ENCODE measurements at regions of chr6 and their contacts with region 1.

Region 1: GRCh38 chr6:52407467-52407866 is 12.7 kb upstream of the EFHC1 start:
- DNase-seq: no peak
- H3K4me3 Mint-ChIP-seq: no peak overlapping the region
- H3K27ac Mint-ChIP-seq: no peak overlapping the region
- H3K4me1 Mint-ChIP-seq: peaks cover 5% of the 10 kb centered on the region
- H3K27me3 Mint-ChIP-seq: peaks cover 1% of the 10 kb centered on the region

Region 2: GRCh38 chr6:52020945-52021570 is 386.4 kb before region 1 on chr6:
- CTCF ChIA-PET with region 1: no interaction called
- POLR2A ChIA-PET with region 1: no interaction called
- DNase-seq: no peak
- H3K4me3 Mint-ChIP-seq: no peak overlapping the region
- H3K27ac Mint-ChIP-seq: no peak overlapping the region
- H3K4me1 Mint-ChIP-seq: no peaks in the 10 kb centered on the region
- H3K27me3 Mint-ChIP-seq: peaks cover 14% of the 10 kb centered on the region

Region 3: DNA sequence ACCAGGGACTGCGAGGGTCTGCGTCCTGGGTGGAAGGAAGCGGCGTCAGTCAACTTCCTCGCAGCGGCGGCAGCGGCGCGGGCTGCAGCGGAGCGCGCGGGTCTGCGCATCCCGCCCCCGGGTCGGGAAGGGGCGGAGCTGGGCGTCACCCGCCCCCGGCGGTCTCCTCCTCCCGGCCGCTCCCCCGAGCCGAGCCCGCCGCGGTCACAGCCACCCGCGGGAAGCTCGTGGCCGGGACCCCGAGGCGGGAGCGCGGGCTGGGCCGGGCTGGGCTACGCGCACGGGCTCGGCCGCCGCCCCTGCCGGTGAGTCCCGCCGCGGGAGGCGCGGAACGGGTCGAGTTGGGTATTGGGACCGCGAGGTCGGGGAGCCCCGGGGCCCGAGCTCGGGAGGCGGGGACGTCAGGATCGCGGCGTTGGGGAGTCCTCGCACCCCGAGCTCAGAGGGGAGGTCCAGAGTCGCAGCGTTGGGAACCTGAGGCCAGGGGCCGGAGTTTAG is 45.5 kb before region 1 on chr6 and contains the start of gene PAQR8:
- CTCF ChIA-PET with region 1: no interaction called
- POLR2A ChIA-PET with region 1: no interaction called
- DNase-seq: peak; percentile 83
- H3K4me3 Mint-ChIP-seq: peak within 1 kb of the TSS; percentile 93
- H3K27ac Mint-ChIP-seq: peak within 1 kb of the TSS; percentile 72
- H3K4me1 Mint-ChIP-seq: peaks cover 29% of the 10 kb centered on the region
- H3K27me3 Mint-ChIP-seq: no peaks in the 10 kb centered on the region
- total RNA-seq, gene PAQR8: 12.8 to 14.1 TPM

Region 4: DNA sequence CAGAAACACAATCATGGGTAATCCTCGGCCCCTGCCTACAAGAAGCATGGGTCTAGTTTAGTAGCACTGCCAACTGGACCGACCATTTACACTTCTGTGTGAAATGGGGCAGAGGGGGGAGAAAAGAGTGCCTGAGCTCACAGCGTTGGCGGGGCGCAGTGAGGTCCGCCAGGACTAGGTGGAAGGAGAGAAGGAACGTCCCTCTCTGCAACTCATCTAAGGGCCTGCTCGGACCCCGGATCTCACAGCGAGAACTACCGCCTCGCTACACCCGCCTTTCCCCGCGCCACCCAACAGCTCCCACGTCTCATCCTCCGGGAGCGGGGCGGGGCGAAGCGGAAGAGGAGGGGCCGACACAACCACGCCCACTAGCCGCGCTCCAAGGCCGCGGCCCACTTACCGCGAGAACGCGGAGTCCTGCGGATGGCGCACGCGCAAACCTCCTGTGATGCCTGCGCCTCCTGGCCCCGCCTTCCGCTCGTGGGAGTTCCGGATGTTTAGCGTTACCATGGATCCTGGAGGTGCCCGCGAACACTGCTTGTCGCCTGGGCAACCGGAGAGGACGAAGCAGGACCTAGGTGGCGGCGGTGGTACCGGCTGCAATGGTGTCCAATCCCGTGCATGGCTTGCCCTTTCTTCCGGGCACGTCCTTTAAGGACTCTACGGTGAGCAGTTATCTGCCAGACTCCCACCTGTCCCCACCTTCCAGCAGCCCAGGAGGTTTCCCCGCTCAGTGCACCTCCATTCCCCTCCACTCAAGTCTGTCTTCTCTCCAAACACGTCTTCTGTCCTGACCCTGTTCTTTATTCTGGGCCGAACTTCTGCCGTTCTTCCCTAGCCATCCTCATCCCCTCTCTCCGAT is 12.6 kb after region 1 on chr6 and contains the start of gene EFHC1:
- CTCF ChIA-PET with region 1: interaction called, 16 read pairs
- POLR2A ChIA-PET with region 1: no interaction called
- DNase-seq: peak; percentile 98
- H3K4me3 Mint-ChIP-seq: no peak within 1 kb of the TSS
- H3K27ac Mint-ChIP-seq: peak within 1 kb of the TSS; percentile 33
- H3K4me1 Mint-ChIP-seq: peaks cover 20% of the 10 kb centered on the region
- H3K27me3 Mint-ChIP-seq: peaks cover 6% of the 10 kb centered on the region
- total RNA-seq, gene EFHC1: 1.6 to 3.4 TPM